Cardiac septum (tissue), 1 donor: ENCODE measurements at regions of chr1 and their contacts with region 1.

Region 1: GRCh38 chr1:236103646-236104218 is 38.6 kb upstream of the GPR137B start:
- DNase-seq: no peak

Region 2: GRCh38 chr1:236156512-236157208 is 52.9 kb after region 1 on chr1:
- intact Hi-C with region 1: no loop called
- DNase-seq: peak; percentile 66

Region 3: DNA sequence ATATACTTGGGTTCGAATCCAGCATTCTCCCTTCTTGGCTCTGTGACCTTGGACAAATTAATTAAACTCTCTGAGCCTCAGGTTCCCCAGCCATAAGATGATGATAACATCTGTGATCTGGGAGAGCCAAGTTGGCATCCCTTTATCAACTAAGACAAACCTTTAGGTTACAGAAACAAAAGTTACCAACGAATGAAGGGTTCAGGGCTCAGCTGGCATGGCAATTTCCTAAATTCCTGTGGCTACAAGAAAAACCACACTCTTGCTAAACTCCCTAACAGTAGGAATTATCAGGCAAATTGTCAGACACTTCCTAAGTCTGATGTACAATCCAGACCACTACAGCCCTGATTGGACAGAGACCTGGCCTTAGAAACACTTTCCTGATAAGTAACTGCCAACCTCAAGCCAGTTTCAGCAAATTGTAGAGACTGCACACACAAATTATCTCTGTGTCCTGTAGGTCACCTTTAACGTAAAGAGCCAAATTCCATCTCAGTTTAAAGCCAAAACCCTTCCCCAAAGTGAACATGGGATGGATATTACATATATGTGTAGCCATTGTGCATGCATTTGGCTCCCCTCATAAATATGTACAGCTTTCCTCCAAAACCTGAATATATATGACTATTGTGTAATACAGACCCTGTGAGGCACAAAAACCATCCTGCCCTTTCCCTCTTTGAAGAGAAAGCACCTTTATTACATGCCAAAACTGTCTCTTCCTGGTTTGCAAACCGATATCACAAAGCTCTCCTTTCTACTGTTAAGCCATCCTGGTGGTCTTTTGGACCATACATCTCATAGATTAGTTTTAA is 250.8 kb after region 1 on chr1:
- intact Hi-C with region 1: no loop called
- DNase-seq: no peak

Region 4: DNA sequence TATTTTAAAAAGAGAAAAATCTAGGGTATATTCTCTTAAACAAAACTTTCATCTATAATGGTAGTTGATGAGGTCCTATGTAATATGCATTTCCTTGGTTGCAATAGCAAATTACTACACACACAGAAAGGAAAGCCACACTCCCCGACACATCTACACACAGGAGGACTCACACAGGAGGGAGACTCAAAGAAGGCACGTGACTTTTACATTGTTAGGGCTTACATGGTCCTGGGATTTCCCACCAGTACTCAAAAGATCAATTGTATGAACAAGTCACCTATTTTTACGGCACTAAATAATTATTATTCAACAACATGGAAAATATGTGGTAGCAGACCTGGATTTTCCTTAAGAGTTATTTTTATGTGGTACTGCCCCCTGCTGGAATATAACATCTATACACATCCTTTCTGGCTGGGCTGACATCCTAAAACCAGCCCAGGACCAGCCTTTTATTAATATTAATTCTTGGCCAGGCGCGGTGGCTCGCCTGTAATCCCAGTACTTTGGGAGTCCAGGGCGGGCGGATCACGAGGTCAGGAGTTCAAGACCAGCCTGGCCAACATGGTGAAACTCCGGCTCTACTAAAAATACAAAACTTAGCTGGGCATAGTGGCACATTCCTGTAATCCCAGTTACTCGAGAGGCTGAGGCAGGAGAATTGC is 386.1 kb after region 1 on chr1:
- intact Hi-C with region 1: loop called (anchors 2 kb)
- DNase-seq: no peak